ENCODE measurements at regions of chr20 and their contacts with region 1.

Region 1: DNA sequence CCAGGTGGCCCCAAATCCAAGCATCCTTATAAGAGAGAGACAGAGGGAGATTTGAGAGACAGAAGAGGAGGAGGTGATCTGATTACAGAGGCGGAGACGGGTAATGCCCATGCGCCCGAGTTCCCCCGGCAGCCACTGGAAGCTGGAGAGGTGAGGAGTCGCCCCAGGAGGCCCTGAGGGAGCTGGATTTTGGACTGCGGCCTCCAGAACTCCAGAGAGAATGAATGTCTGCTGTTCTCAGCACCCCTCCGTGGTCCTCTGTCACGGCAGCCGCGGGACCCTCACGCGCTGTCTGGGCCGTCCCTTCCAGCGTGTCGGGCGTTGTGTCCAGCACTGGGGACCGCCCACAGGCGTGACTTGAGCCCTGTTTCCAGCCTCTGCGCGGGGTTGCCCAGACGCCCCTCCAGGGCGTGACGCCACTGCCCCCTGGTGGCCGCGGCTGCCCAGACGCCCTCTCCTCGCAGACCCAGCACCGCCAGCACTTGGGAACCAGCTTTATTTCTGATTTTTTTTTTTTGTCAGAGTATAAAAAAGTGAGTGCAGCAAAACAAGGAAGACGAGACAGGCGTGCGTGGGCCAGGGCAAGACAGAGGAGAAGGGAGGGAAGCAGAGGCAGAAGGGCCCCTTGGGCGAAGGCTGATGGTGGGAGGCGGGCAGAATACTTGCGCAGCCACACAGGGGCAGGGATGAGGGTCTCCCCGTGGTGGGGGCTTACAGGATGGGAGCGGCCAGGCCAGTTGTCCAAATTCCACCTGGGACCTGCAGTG is 4.1 kb upstream of the ZNF512B start:
- DNase-seq: peak; percentile 91 to 93 (median 91)
- ATAC-seq: peak; percentile 76 to 86 (median 82)
- H3K4me3 ChIP-seq: peak overlapping the region; percentile 23 to 45 (median 39)
- H3K27ac ChIP-seq: peak overlapping the region in 1 of 3 donors; percentile 19
- H3K4me1 ChIP-seq: peaks cover 0 to 18% (median 6%) of the 10 kb centered on the region in 4 donors
- H3K27me3 ChIP-seq: no peaks in the 10 kb centered on the region
- CTCF ChIP-seq: peak; percentile 94 to 100 (median 99)
- POLR2A ChIP-seq: no peak

Region 2: DNA sequence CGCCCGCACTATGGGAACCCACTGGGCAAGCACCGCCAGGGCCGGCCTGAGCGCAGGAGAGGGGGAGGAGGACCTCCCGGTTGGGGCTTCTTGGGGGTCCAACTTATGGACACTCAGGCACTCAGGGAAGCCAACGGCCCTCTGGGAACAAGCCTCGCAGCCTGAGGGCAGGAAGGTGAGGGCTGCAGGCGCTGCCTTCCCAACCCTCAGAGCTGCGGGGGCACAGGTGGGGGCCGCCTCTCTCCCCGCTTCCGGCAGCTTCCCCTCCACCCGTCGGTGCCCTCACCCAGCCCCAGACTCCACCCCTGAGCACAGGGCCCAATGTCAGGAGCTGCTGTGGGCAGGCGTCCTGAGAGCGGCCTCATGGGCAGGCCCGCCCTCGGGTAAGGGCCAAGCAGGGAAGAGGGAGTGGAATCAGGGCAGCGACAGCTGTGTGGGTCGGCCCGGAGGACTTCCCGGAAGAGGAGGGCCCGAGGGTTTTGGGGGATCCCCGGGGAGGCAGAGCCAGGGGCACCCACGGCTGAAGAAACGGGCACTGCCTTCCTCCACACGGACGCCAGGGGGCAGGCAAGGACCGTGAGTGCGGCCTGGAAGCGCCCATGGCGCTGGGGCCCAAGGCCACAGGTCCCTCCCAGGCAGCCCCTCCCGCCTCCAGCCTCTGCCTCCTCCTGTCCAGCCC is 436.2 kb before region 1 on chr20:
- intact Hi-C with region 1: loop called (anchors 10 kb)
- DNase-seq: peak; percentile 96 to 98 (median 98)
- ATAC-seq: peak; percentile 85 to 89 (median 87)
- H3K4me3 ChIP-seq: peak overlapping the region; percentile 32 to 46 (median 33)
- H3K27ac ChIP-seq: peak overlapping the region; percentile 72 to 88 (median 75)
- H3K4me1 ChIP-seq: peaks cover 0 to 16% (median 7%) of the 10 kb centered on the region in 4 donors
- H3K27me3 ChIP-seq: no peaks in the 10 kb centered on the region
- CTCF ChIP-seq: peak; percentile 97 to 99 (median 98)
- POLR2A ChIP-seq: peak; percentile 88

Region 3: DNA sequence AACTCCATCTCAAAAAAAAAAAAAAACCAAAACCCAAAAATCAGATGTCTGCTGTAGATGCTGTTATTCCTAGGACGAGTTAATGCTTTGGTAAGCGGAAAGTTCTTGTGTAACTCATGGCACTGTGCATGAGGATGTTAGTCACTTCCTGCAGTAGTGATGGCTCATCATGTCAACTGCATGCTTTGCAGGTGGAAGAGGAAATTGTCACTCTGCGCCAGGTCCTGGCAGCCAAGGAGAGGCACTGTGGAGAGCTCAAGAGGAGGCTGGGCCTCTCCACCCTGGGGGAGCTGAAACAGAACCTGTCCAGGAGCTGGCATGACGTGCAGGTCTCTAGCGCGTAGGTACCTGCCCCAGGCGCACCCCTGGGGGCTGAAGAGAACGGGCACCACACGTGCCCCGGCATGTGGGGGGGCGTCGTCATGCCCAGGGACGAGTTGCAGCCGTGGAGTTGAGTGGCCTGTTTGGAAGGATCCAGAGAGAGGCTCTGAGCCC is 100.3 kb before region 1 on chr20:
- intact Hi-C with region 1: no loop called
- DNase-seq: peak in 2 of 3 donors; percentile 63 to 74
- ATAC-seq: peak; percentile 78 to 93 (median 88)
- H3K4me3 ChIP-seq: no peak overlapping the region
- H3K27ac ChIP-seq: peak overlapping the region in 2 of 3 donors; percentile 66 to 80
- H3K4me1 ChIP-seq: no peaks in the 10 kb centered on the region
- H3K27me3 ChIP-seq: no peaks in the 10 kb centered on the region
- CTCF ChIP-seq: no peak
- POLR2A ChIP-seq: no peak

Region 4: DNA sequence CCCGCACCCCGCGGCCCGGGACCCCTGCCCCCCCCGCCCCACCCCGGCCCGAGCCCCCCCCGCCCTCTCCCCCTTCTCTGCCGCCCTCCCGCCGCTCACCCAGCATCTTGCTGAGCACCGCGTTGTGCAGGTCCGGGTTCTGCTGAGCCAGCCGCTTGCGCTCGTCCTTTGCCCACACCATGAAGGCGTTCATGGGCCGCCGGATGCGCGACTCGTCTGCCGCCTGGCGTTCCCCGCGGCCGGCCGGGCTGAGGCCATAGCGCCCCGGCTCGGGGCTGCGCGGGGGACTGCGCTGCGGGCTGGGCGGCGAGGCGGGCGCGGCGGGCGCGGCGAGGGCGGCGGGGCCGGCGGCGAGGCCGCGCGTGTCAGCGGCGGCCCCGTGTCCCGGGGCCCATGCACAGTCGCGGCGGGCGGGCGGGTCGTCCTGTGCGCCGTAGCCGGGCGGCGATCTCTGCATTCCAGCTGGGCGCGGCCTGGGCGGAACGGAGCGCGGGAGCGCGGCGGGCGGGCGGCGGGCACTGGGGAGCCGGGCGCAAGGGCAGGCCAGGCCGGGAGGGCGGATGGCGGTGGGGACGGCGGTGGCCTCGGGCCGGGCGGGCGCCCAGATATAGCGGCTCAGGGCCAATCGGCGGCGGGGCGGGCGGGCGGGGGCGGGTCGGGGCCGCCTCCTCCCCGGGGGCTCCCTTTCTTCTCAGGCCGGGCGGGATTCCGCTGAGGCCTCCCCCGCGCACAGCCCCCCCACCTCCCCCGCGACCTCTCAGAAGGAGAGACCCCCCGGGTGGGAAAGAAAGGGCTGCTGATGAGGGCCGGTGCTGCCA is 75.5 kb after region 1 on chr20 and contains the start of gene SOX18:
- intact Hi-C with region 1: no loop called
- DNase-seq: peak in 1 of 3 donors; percentile 67
- ATAC-seq: peak; percentile 11 to 42 (median 19)
- H3K4me3 ChIP-seq: peak within 1 kb of the TSS; percentile 17 to 41 (median 27)
- H3K27ac ChIP-seq: peak within 1 kb of the TSS in 1 of 3 donors; percentile 67
- H3K4me1 ChIP-seq: no peaks in the 10 kb centered on the region
- H3K27me3 ChIP-seq: no peaks in the 10 kb centered on the region
- CTCF ChIP-seq: no peak
- POLR2A ChIP-seq: no peak
- total RNA-seq, gene SOX18: 4.1 to 7.8 (median 5.6) TPM

Region 5: DNA sequence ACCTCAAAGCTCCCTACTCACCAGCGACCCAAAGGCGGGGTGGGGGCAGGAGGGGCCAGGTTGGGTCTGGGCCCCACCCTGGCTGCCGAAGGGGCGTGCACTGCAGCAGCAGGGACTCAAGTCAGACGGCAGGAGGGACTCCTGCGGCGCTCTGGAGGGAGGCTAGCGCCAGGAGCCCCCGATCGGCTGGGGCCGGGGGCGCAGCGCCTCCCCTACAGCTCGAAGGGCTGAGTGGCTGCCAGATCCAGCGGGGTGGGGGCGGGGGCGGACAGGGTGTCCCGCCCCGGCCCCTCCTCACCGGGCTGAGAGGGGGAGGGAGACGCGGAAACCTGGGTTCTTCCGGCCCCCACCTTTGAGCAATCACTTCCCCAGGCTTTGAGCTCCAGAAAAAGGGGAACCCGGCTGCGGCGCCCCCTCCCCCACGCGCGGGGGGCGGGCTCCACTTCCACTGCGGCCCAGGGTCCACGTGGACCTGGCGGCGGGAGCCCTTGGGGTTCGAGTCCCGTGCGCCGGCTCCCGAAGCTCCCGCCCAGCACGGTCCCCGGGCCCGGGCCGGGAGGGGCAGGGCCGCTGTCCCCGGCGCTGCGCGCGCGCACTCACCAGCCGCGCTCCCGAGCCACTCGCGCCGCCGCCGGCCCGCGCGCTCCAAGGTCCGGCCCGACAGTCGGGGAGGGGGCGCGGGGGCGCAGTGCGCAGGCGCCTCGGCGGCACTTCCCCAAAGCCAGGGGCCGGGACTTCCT is 105.6 kb after region 1 on chr20 and contains the start of gene RGS19:
- intact Hi-C with region 1: no loop called
- DNase-seq: peak; percentile 79 to 86 (median 81)
- ATAC-seq: peak; percentile 51 to 57 (median 54)
- H3K4me3 ChIP-seq: peak within 1 kb of the TSS; percentile 56 to 63 (median 58)
- H3K27ac ChIP-seq: peak within 1 kb of the TSS; percentile 50 to 73 (median 68)
- H3K4me1 ChIP-seq: peaks cover 0 to 18% (median 1%) of the 10 kb centered on the region in 4 donors
- H3K27me3 ChIP-seq: peaks cover 0 to 8% of the 10 kb centered on the region in 2 donors
- CTCF ChIP-seq: no peak
- POLR2A ChIP-seq: peak; percentile 21
- total RNA-seq, gene RGS19: 2.6 to 10.9 (median 5.7) TPM

Measured in right lobe of liver (tissue), 6 donors.